ENCODE measurements at regions of chr17 and their contacts with region 1.

Region 1: DNA sequence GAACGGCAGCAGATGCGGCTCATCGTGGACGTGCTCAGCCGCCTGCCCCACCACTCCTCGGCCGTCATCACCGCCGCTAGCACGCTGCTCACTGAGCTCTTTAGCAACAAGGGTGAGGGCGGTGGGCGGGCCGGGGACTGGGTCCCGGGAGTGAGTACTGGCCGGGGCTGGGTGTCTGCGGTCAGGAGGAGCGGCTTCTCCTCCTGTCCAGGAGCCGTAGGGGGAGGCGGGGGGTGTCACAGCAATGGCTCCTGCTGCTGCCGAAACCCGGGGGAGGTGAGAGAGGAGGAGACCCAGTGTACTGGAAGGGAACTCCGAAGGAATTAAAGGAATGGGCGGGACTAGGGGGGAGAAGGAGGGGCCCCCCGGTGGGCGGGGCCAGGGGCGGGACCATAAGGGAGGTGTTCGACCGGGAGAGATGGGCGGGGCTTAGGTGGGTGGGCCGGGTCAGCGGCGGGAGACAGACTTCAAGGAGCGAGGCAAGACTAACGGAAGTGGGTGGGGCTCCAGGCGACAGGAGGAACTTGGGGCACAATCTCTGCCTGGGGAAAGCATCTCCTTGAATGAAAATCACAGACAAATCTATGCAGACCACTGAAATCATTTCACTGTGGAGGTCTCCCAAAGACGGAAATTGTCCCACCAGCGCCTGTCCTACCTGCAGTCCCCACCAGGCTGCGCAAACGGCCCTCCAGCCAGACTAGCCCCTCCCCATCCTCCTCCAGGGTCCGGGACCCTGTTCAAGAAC is 2.4 kb downstream of the NAGS start:
- DNase-seq: peak; percentile 79
- H3K4me3 ChIP-seq: peak overlapping the region; percentile 65
- H3K27me3 ChIP-seq: 0 out of 2 replicates have a peak, but pooled peaks cover 1% of the 10 kb centered on the region
- CTCF ChIP-seq: peak; percentile 72

Region 2: DNA sequence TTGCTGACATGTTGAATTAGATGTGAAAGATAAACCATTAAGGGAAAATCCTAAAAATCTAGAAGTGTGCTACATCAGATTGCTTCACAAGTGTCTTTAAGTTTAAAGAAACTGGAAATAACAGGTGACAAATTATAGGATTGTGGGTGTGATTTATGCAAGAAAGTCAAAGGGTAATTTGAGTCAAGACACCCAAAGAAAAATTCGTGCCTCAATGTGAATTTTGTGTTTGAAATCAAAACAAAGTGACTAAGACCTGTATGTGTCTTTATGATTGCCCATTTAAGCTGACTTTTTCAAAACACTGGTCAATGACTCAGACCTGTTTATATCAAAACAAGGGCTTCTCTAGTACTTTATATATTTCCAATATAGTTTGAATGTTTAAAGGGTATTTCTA is 47.8 kb before region 1 on chr17:
- CTCF ChIA-PET with region 1: no interaction called
- POLR2A ChIA-PET with region 1: no interaction called
- DNase-seq: no peak
- H3K4me3 ChIP-seq: no peak overlapping the region
- H3K27me3 ChIP-seq: peaks cover 15% of the 10 kb centered on the region
- CTCF ChIP-seq: no peak

Region 3: GRCh38 chr17:44123356-44124117 is 116.8 kb after region 1 on chr17 and contains the start of gene HDAC5:
- CTCF ChIA-PET with region 1: interaction called, 4 read pairs
- POLR2A ChIA-PET with region 1: interaction called, 18 read pairs
- DNase-seq: peak; percentile 53
- H3K4me3 ChIP-seq: peak within 1 kb of the TSS; percentile 95
- H3K27me3 ChIP-seq: no peaks in the 10 kb centered on the region
- CTCF ChIP-seq: peak; percentile 74
- polyA plus RNA-seq, gene HDAC5: 46.4 and 102 TPM in 2 replicates

Measured in BJ (cell line).